ENCODE measurements at regions of chr1 and their contacts with region 1.

Region 1: DNA sequence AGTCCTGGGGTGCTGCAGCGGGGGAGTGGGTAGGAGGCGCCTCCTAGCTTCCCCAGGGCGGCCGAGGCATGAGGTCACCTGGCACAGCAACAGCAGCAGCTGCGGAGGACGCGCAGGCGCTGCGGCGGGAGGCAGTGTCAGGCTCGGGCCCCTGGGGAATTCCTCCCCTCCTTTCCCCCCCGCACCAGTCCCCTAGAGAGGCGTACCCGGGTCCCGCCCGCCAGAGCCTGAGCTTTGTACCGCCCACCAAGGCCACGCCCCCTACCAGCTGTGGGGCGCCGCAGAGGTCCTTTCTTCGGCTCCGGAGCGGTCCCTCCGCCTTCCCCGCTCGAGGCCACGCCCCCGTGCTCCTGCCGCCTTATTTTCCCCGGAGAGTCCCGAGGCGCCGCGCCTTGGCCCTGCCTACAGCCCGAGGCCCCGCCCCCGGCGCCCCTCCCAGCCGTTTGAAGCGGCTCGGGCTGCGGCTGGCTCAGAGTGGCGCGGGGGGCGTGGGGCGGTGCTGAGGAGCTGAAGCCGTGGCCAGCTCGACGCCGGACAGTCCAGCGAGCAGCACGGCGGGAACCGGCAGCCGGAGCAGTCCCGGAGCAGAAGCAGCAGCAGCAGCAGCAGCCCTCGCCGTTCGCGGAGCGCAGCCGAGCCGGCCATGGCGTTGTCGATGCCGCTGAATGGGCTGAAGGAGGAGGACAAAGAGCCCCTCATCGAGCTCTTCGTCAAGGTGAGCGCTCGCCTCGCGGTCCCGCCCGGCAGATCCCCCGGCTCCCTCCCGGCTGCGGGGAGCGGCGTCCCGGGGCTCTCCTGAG is at the start of gene CLIC4:
- DNase-seq: peak; percentile 100
- H3K4me3 ChIP-seq: peak within 1 kb of the TSS; percentile 82 to 97 (median 94)
- H3K27ac ChIP-seq: peak within 1 kb of the TSS; percentile 88 to 99 (median 96)
- H3K4me1 ChIP-seq: peaks cover 18 to 51% (median 31%) of the 10 kb centered on the region in 4 donors
- H3K27me3 ChIP-seq: peaks cover 5% of the 10 kb centered on the region
- CTCF ChIP-seq: peak in 1 of 5 experiments; percentile 18
- EP300 ChIP-seq: no peak
- POLR2A ChIP-seq: peak; percentile 93
- total RNA-seq, gene CLIC4: 52.4 to 107 (median 65.0) TPM

Region 2: GRCh38 chr1:24248859-24249258 is 496.3 kb before region 1 on chr1:
- in situ Hi-C with region 1: no loop called
- intact Hi-C with region 1: no loop called
- DNase-seq: no peak
- H3K4me3 ChIP-seq: no peak overlapping the region
- H3K27ac ChIP-seq: no peak overlapping the region
- H3K4me1 ChIP-seq: peaks cover 0 to 4% (median 0%) of the 10 kb centered on the region in 4 donors
- H3K27me3 ChIP-seq: no peaks in the 10 kb centered on the region
- CTCF ChIP-seq: no peak
- EP300 ChIP-seq: no peak
- POLR2A ChIP-seq: no peak

Region 3: DNA sequence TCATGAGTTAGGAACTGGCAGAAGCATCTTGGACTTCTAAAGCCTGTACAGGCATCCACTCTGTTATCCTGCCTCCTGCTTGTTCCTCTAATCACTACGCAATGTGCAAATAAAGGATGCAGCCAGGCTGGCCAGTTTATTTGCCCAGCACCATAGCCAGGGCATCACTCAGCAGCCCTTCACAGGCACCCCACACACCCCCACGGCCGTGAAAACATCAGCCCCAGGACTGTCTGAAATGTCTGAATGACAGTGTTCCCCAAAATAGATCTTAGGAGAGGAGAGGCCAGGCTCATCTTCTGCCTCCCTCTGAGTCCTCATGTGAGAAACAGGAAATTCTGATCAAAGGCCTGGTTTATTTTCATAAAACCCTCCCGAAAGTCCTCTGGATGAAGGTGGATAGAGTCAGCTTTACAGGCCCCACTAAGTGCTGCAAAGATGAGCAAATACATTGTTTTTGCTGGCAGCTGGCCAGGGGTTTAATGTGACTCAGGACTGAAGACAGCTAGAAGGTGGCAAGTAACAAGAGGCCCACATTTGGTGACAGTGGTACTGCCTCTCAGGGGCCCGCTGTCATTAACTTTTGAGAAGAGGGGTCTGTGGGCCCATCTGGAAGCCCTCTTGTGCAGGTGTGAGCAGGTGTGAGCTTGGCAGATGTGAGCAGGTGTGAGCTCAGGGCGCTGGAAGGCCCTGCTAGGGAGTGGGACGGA is 393.0 kb before region 1 on chr1:
- in situ Hi-C with region 1: no loop called
- intact Hi-C with region 1: no loop called
- DNase-seq: no peak
- H3K4me3 ChIP-seq: no peak overlapping the region
- H3K27ac ChIP-seq: no peak overlapping the region
- H3K4me1 ChIP-seq: no peaks in the 10 kb centered on the region
- H3K27me3 ChIP-seq: no peaks in the 10 kb centered on the region
- CTCF ChIP-seq: no peak
- EP300 ChIP-seq: no peak
- POLR2A ChIP-seq: no peak

Region 4: DNA sequence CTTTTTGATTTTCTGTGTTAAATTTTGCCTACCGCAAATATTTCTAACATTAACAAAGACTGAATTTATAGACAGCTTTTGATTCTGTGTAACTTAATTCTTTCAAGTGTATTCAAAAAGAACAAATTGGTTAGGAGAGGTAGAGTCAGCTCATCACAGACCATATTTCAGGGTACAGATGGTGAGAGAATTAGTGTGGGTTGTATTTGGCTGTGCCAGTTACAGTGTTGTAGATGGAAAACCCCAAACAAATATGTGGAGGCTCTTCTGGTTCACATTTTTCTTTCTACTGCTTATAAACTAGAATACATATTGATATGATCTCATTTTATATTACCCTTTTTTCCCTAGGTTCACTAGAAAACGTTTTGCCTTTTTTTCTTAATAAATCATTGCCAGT is 231.4 kb before region 1 on chr1:
- in situ Hi-C with region 1: no loop called
- intact Hi-C with region 1: no loop called
- DNase-seq: no peak
- H3K4me3 ChIP-seq: no peak overlapping the region
- H3K27ac ChIP-seq: no peak overlapping the region
- H3K4me1 ChIP-seq: no peaks in the 10 kb centered on the region
- H3K27me3 ChIP-seq: no peaks in the 10 kb centered on the region
- CTCF ChIP-seq: no peak
- EP300 ChIP-seq: no peak
- POLR2A ChIP-seq: no peak

Region 5: DNA sequence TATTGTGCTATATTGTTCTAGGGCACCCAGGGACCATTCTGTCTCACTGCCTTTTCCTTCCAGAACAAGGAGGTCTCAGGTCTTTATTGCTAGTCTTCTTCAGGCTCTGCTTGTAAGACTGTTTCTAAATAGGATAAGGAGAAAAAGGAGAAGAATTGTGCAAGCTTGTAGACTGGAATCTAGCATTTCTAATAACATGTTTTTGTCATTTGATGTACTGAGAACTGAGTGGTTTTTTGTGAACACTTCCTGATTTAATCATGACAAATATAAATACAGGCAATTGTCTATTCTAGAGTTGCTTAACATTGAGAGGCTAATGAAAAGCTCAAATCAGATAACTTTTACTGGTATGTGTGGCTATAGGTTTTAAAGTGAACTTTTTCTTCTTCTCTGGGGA is 77.8 kb after region 1 on chr1:
- in situ Hi-C with region 1: no loop called
- intact Hi-C with region 1: loop called (anchors 10 kb)
- DNase-seq: no peak
- H3K4me3 ChIP-seq: no peak overlapping the region
- H3K27ac ChIP-seq: no peak overlapping the region
- H3K4me1 ChIP-seq: peaks cover 0 to 26% (median 2%) of the 10 kb centered on the region in 4 donors
- H3K27me3 ChIP-seq: no peaks in the 10 kb centered on the region
- CTCF ChIP-seq: no peak
- EP300 ChIP-seq: no peak
- POLR2A ChIP-seq: no peak